Psoas muscle (tissue), 8 donors: ENCODE measurements at regions of chr17 and their contacts with region 1.

Region 1: DNA sequence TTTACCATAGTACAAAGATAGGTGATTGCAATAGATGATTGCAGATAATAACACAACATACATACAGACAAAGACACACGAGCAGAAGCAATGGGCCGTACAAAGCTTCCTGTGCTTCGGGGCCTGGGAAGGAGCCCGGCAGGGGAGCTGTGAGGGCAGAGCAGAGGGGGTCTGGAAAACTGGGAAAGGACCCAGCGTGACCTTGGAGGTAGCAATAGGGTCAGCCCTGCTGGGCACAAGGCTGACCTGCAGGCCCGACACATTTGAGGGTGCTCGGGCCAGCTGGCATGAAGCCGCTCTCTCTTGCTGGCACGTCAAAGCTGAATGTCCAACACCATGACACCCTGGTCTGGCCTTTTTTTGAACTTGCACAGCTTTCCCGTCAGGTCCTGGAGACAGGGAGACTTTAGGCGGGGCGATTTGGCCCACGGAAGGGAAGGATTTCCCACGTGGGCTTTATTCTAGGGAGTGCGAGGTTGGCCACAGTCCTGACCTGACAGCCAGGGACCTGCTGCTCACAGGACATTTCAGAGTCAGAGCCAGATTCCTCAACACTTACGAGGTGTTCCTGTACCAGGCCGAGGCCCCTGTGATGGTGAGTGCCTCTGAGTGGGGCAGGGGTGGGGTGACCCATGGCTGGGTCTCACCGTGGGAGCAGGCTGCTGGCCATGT is 83.2 kb downstream of the NTN1 start:
- DNase-seq: peak in 1 of 2 donors; percentile 23
- ATAC-seq: peak in 2 of 4 donors; percentile 29 to 83
- H3K4me3 ChIP-seq: no peak overlapping the region
- H3K27ac ChIP-seq: no peak overlapping the region
- H3K4me1 ChIP-seq: no peaks in the 10 kb centered on the region
- H3K27me3 ChIP-seq: no peaks in the 10 kb centered on the region
- CTCF ChIP-seq: no peak

Region 2: DNA sequence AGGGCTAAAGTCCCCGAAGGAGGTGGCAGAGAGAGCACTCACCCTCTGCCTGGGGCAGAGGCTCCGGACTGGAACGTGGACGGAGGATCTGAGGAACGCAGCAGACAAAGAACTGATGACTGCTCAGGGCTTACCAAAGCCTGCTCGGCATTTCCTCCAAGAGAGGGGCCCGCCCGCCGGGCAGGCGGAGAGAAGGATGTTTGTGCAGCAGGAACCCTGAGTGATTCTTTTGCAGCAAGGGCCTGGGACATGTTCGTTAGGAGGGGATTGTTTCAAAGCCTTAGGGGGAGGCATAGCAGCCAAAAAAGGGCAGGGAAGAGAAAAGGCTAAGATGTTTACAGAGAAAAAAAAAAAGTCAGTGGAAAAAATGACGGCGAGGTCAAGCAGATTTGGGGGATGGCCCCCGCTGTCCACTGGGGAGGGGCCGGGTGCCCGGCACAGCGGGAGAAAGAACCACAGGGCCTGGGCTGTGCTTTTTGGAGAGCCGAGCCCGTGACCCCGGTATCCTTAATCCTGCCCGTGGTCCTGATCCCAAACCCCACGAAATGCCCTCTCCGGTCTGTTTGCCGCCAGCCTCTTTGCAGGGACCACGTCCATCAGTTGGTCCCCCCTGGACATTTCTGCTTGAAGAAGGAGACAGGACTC is 46.1 kb after region 1 on chr17:
- intact Hi-C with region 1: loop called in 1 of 2 experiments (anchors 10 kb)
- DNase-seq: no peak
- ATAC-seq: no peak
- H3K4me3 ChIP-seq: no peak overlapping the region
- H3K27ac ChIP-seq: no peak overlapping the region
- H3K4me1 ChIP-seq: no peaks in the 10 kb centered on the region
- H3K27me3 ChIP-seq: peaks cover 0 to 4% (median 0%) of the 10 kb centered on the region in 3 donors
- CTCF ChIP-seq: no peak